Activated T-helper 1 cell treated with anti-CD3 and anti-CD28 coated beads, Interleukin-12 subunit alpha, Interleukin-12 subunit beta, Interleukin-2, Interleukin-4 antibody, amounts not matched to agents 30 ng/mL and 10 ng/mL and 1 ng/mL, durations not matched to agents 14 hours and 24 hours and 36 hours (primary cell): ENCODE measurements at regions of chr2 and their contacts with region 1.

Region 1: GRCh38 chr2:176157499-176158185 is 535 bp downstream of the HOXD3 start:
- DNase-seq: no peak
- H3K4me3 Mint-ChIP-seq: no peak overlapping the region
- H3K27ac Mint-ChIP-seq: peak overlapping the region; percentile 85
- H3K4me1 Mint-ChIP-seq: no peaks in the 10 kb centered on the region
- H3K27me3 Mint-ChIP-seq: peaks cover 72% of the 10 kb centered on the region

Region 2: DNA sequence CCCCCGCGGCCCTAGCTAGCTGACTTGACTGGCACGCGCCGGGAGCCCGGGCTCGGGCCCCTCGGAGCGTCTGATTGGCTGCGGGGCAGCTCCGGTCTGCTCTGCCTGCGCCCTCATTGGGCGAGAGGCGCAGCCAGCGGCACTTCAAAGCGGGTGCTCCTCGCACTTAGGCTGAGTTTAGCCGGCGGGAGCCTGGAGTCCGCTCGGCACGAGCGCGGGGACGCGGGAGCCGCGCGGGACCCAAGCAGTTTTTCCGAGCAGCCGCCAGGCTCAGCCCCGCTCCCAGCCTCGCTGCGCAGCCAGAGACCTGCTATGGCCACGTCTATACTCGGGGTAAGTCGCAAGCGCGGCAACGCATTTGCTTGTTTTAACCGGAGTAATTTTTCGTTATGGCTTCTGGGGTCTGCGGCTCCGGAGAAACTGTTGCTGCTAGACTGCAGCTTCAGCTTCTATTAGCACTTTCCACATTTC is 1822.8 kb before region 1 on chr2 and contains the start of gene SP9:
- intact Hi-C with region 1: loop called (anchors 5 kb)
- DNase-seq: no peak
- H3K4me3 Mint-ChIP-seq: peak within 1 kb of the TSS; percentile 53
- H3K27ac Mint-ChIP-seq: peak within 1 kb of the TSS; percentile 81
- H3K4me1 Mint-ChIP-seq: peaks cover 28% of the 10 kb centered on the region
- H3K27me3 Mint-ChIP-seq: peaks cover 77% of the 10 kb centered on the region
- total RNA-seq, gene SP9: not detected in 2 replicates

Region 3: GRCh38 chr2:176079831-176080539 is 77.7 kb before region 1 on chr2:
- intact Hi-C with region 1: loop called (anchors 2 kb)
- DNase-seq: no peak
- H3K4me3 Mint-ChIP-seq: peak overlapping the region; percentile 15
- H3K27ac Mint-ChIP-seq: peak overlapping the region; percentile 89
- H3K4me1 Mint-ChIP-seq: no peaks in the 10 kb centered on the region
- H3K27me3 Mint-ChIP-seq: peaks cover 72% of the 10 kb centered on the region

Region 4: DNA sequence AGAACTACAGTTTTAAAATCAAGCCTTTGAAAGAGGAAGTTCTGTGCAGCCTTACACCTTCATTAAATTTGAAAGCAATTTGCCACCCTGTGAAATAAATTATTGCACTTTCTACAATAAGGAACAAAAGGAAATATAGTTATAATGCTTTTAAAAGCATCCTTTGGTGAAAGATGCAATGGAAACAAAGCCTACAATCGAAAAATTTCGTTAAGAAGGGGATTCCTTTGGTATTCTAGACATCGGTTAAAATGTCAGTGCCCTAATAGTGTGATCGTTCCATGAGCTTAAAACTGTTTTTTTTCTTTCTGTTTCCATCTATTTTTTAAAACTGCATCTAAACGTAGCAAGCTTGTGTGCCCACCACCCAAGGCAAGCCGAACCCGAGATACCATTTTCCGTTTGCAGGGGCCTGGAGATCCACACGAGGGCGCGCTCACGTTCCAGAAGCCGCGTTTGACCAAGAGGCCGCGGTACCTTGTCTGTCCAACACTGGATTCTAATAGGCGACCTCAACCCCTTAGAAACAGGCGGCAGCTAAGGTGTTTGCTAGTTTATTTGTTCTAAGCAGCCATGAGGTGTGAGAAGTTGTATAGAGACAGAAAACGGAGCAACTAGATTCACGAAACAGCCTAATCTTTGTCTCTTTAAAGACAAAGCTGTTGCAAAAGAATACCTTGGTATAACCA is 46.5 kb before region 1 on chr2:
- intact Hi-C with region 1: loop called (anchors 10 kb)
- DNase-seq: no peak
- H3K4me3 Mint-ChIP-seq: no peak overlapping the region
- H3K27ac Mint-ChIP-seq: peak overlapping the region; percentile 68
- H3K4me1 Mint-ChIP-seq: peaks cover 3% of the 10 kb centered on the region
- H3K27me3 Mint-ChIP-seq: peaks cover 68% of the 10 kb centered on the region

Region 5: DNA sequence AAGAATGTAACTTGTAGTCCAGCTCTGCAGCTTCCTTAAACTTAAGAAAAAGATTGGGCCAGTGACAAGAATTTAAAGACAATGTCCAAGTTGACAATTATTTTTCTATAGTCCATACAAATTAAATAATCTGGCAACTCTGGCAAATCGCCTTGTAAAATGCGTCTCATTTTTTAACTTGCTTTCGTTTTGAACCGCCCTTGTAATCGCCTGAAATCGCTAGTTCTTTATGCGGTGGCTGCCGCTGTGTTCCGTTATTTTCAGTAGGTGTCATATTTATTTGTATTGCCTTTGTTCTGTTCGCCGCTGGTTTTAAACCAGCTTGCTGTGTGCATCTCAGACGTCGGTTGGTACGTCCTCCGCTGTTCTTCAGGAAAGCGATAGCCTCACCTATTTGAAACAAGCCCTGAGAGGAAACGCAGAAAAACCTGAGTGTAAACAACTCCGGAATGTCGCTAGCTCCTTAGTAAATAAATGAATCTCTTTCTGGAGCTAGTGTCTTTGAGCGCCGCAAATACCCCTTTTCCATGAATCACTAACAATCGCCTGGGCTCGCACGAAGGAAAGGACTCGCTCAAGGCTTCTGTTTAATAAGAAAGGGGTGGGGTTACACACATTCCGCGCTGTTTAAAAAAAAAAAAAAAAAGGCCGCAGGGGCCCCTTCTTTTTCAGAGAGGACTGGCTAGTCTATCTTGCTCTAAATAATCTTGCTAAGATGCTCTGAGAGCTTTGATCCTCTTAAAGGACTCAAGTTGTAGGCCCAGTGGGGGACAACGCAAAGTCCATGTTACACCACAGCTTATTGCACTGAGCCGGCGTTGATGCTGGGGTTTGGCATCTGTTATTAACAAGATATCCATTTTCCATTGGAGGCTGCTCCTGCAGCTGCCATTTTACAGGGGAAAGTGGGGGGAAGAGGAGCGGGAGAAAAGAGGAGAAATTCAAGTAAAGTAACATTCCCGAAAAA is 25.2 kb before region 1 on chr2:
- intact Hi-C with region 1: loop called (anchors 2 kb)
- DNase-seq: no peak
- H3K4me3 Mint-ChIP-seq: peak overlapping the region; percentile 74
- H3K27ac Mint-ChIP-seq: peak overlapping the region; percentile 68
- H3K4me1 Mint-ChIP-seq: peaks cover 27% of the 10 kb centered on the region
- H3K27me3 Mint-ChIP-seq: peaks cover 79% of the 10 kb centered on the region

Region 6: DNA sequence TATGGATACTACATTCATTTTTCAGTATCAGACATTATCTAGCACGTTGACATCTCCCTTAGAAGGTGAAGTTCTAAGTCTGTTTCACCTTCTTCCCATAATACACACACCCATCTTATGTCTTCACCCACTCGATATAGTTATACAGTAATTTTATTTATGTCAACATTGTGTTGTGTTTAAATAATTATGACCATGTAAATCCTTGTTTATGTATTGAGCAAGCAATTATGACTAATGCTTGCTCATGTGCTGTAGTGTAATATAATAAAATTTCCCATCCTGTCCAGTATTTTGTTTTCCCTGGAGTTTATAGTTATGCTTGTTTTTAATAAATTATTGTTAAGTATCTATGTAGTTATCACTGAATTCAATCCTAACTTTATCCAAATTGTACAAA is 274.8 kb after region 1 on chr2:
- intact Hi-C with region 1: no loop called
- DNase-seq: no peak
- H3K4me3 Mint-ChIP-seq: no peak overlapping the region
- H3K27ac Mint-ChIP-seq: no peak overlapping the region
- H3K4me1 Mint-ChIP-seq: no peaks in the 10 kb centered on the region
- H3K27me3 Mint-ChIP-seq: peaks cover 10% of the 10 kb centered on the region

Region 7: GRCh38 chr2:177029480-177029879 is 871.8 kb after region 1 on chr2:
- intact Hi-C with region 1: no loop called
- DNase-seq: no peak
- H3K4me3 Mint-ChIP-seq: no peak overlapping the region
- H3K27ac Mint-ChIP-seq: no peak overlapping the region
- H3K4me1 Mint-ChIP-seq: no peaks in the 10 kb centered on the region
- H3K27me3 Mint-ChIP-seq: peaks cover 11% of the 10 kb centered on the region